Common myeloid progenitor, CD34-positive (primary cell): ENCODE measurements at regions of chr10 and their contacts with region 1.

Region 1: DNA sequence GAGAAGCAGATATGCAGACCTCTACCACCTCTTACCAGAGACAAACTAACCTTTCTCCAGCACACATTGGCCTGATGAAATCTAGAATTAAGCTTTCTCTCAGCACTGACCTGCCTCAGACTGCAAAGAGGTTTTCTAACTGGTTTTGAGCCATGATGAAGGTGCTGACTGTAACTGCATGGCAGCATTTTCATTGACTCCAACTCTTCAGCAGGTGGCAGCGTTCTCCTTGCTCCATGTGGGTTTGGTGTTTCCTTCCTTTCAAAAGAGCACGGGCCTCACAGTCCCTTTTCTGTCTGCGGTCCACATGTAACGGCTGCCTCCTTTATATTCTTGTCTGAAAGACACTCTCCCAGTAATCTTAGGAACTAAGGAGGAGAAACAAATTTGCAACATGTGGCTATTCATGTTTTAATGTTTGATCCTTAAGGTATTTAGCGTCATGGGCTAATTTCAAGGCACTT is 12.6 kb downstream of the KLLN start:
- DNase-seq: peak; percentile 75 to 85 (median 83)
- H3K4me3 ChIP-seq: peak overlapping the region in 1 of 7 experiments; percentile 3
- H3K27ac ChIP-seq: no peak overlapping the region
- H3K4me1 ChIP-seq: peaks cover 5 to 17% (median 11%) of the 10 kb centered on the region in 4 experiments
- H3K27me3 ChIP-seq: no peaks in the 10 kb centered on the region

Region 2: GRCh38 chr10:87691506-87692070 is 159.2 kb before region 1 on chr10:
- CTCF ChIA-PET with region 1: no interaction called
- POLR2A ChIA-PET with region 1: no interaction called
- DNase-seq: peak; percentile 60 to 83 (median 66)
- H3K4me3 ChIP-seq: peak overlapping the region in 1 of 7 experiments; percentile 7
- H3K27ac ChIP-seq: no peak overlapping the region
- H3K4me1 ChIP-seq: peaks cover 6 to 17% (median 15%) of the 10 kb centered on the region in 4 experiments
- H3K27me3 ChIP-seq: no peaks in the 10 kb centered on the region

Region 3: GRCh38 chr10:87817609-87818504 is 32.9 kb before region 1 on chr10 and contains the start of gene ATAD1:
- CTCF ChIA-PET with region 1: interaction called, 23 read pairs
- POLR2A ChIA-PET with region 1: no interaction called
- DNase-seq: peak; percentile 88 to 94 (median 94)
- H3K4me3 ChIP-seq: peak within 1 kb of the TSS; percentile 63 to 97 (median 93)
- H3K27ac ChIP-seq: peak within 1 kb of the TSS; percentile 93 to 96
- H3K4me1 ChIP-seq: peaks cover 10 to 40% (median 21%) of the 10 kb centered on the region in 4 experiments
- H3K27me3 ChIP-seq: no peaks in the 10 kb centered on the region

Region 4: GRCh38 chr10:88386821-88387773 is 536.3 kb after region 1 on chr10:
- CTCF ChIA-PET with region 1: interaction called, 19 read pairs
- POLR2A ChIA-PET with region 1: no interaction called
- DNase-seq: peak; percentile 91 to 97 (median 97)
- H3K4me3 ChIP-seq: peak overlapping the region in 5 of 7 experiments; percentile 9 to 63 (median 52)
- H3K27ac ChIP-seq: peak overlapping the region; percentile 99
- H3K4me1 ChIP-seq: peaks cover 52 to 80% (median 70%) of the 10 kb centered on the region in 4 experiments
- H3K27me3 ChIP-seq: no peaks in the 10 kb centered on the region

Region 5: DNA sequence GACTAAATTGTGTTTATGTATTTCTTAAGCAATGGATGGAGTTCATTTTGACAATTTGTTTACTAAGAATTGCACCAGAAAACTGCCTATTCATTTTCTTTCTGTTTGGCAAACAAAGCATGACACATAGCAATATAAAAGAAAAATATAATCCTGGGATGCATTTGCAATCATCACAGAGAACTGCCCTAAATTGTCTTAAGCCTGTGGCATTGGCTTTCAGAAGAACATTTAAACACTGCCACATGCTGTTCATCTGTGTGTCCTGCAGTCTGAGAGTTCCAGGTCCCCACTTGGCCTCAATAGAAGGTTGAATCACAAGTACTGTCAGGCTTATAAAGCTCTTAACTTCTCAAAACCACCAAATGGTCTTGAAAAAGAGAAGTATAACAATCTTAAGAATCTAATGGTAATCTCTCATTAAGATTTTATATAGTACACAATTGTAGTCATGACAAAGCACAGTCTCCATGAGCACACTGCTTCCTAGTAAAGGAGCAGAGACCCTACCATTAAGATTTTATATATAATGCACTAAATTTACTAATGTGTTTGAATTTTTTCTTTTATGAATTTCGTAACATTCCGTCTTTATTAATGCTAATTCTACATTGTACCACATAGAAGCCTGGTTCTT is 702.5 kb after region 1 on chr10:
- CTCF ChIA-PET with region 1: interaction called, 21 read pairs
- POLR2A ChIA-PET with region 1: no interaction called
- DNase-seq: peak; percentile 83 to 92 (median 92)
- H3K4me3 ChIP-seq: no peak overlapping the region
- H3K27ac ChIP-seq: no peak overlapping the region
- H3K4me1 ChIP-seq: no peaks in the 10 kb centered on the region
- H3K27me3 ChIP-seq: no peaks in the 10 kb centered on the region